Gastrocnemius medialis (tissue), 4 donors: ENCODE measurements at regions of chr2 and their contacts with region 1.

Region 1: DNA sequence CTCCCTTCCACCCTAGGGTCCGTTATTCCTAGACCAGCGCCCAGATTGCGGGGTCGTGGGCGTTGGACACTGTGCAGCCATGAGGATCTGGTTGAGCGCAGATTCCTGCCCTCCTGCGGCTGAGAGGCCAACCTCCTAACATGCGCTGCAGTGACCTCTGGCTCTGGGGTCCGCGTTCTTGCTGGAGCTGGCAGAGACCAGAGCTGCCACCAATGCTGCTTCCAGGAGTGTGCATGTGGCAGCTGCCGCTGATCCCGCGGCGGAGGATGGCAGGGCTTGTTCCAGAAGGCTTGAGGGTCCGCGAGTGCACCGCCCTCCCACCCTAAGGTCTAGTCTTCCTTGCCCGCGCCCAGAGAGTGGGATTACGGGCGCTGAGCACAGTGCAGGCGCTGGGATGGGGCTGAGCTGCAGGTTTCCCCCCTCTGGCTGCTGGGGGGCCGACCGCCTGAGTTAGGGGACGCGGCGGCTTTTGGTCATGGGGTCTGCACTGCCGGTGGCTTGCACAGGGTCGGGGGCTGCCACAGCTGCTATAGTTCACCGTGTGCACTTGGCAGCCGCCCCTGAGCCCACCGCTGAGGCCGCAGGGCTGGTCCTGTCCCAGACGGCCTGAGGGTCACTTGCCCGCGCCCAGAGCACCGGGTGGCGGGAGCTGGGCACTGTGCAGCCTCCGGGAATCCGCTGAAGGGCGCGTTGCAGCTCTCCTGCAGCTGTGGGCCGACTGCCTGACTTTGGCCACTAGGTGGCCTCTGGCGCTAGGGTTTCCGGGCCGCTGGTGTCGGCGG is 145.9 kb downstream of the CCDC74A start:
- DNase-seq: peak; percentile 35 to 65
- ATAC-seq: peak; percentile 69 to 82
- H3K4me3 ChIP-seq: peak overlapping the region; percentile 30 to 69 (median 43)
- H3K27ac ChIP-seq: no peak overlapping the region
- H3K4me1 ChIP-seq: peaks cover 6 to 23% of the 10 kb centered on the region in 2 donors
- H3K27me3 ChIP-seq: peaks cover 0 to 4% (median 0%) of the 10 kb centered on the region in 3 donors
- CTCF ChIP-seq: peak; percentile 67 to 93 (median 78)
- POLR2A ChIP-seq: no peak

Region 2: GRCh38 chr2:131154071-131154531 is 519.5 kb before region 1 on chr2:
- in situ Hi-C with region 1: no loop called
- intact Hi-C with region 1: loop called (anchors 10 kb)
- DNase-seq: no peak
- ATAC-seq: peak; percentile 69 to 87
- H3K4me3 ChIP-seq: no peak overlapping the region
- H3K27ac ChIP-seq: no peak overlapping the region
- H3K4me1 ChIP-seq: no peaks in the 10 kb centered on the region
- H3K27me3 ChIP-seq: no peaks in the 10 kb centered on the region
- CTCF ChIP-seq: peak; percentile 56 to 76 (median 66)
- POLR2A ChIP-seq: no peak

Region 3: DNA sequence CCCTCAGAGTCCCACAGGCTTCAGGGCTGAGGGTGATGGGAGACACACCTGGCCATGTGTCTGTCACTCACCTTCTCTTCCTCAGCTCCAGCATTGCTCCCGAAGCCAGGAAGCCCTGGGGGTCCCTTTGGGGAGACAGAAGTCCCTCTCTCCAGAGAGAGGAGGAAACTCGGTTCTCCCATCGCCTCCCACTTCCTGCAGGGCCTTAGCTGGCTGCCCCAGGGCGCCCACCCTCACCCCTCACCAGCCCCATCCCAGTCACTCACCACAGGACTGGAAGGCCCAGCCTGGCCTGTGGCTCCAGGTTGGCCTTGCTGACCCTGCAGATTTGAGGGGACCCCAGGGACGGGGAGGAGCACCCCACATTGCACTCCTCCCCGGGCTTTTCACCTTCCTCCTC is 306.9 kb before region 1 on chr2:
- in situ Hi-C with region 1: no loop called
- intact Hi-C with region 1: no loop called
- DNase-seq: no peak
- ATAC-seq: no peak
- H3K4me3 ChIP-seq: no peak overlapping the region
- H3K27ac ChIP-seq: no peak overlapping the region
- H3K4me1 ChIP-seq: no peaks in the 10 kb centered on the region
- H3K27me3 ChIP-seq: peaks cover 0 to 27% (median 12%) of the 10 kb centered on the region in 3 donors
- CTCF ChIP-seq: no peak
- POLR2A ChIP-seq: no peak

Region 4: DNA sequence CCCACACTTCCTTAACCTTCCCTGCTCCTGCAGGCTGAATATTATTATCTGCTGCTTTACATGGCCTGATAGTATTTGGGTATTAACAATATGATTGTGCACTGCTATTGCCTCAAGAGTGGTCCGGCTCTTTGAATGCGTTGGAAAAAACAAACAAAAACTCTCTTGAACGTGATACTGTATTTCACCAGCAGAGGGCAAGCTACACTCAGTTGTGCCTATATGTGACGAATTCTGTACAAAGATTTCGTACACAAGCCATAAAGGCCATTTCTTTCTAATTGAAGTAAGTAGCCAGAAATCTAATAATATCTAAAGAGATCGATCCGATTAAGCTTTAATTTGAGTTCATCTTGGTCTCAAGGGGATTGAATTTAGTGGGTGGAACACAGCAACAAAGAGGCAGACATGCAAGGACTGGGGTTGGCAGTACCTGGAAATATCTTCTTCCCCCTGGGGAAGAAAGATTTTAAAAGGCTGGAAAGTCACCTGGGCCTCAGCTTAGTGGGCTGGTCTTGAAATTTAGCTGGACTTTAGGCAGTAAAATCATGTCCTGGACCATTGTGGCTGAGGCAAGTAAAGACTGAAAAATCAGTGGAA is 260.3 kb before region 1 on chr2:
- in situ Hi-C with region 1: no loop called
- intact Hi-C with region 1: loop called (anchors 2 kb)
- DNase-seq: no peak
- ATAC-seq: peak in 1 of 2 donors; percentile 62
- H3K4me3 ChIP-seq: no peak overlapping the region
- H3K27ac ChIP-seq: no peak overlapping the region
- H3K4me1 ChIP-seq: no peaks in the 10 kb centered on the region
- H3K27me3 ChIP-seq: peaks cover 0 to 5% (median 0%) of the 10 kb centered on the region in 3 donors
- CTCF ChIP-seq: peak; percentile 51 to 76 (median 62)
- POLR2A ChIP-seq: no peak